Naive thymus-derived CD4-positive, alpha-beta T cell (primary cell): ENCODE measurements at regions of chr22 and their contacts with region 1.

Region 1: DNA sequence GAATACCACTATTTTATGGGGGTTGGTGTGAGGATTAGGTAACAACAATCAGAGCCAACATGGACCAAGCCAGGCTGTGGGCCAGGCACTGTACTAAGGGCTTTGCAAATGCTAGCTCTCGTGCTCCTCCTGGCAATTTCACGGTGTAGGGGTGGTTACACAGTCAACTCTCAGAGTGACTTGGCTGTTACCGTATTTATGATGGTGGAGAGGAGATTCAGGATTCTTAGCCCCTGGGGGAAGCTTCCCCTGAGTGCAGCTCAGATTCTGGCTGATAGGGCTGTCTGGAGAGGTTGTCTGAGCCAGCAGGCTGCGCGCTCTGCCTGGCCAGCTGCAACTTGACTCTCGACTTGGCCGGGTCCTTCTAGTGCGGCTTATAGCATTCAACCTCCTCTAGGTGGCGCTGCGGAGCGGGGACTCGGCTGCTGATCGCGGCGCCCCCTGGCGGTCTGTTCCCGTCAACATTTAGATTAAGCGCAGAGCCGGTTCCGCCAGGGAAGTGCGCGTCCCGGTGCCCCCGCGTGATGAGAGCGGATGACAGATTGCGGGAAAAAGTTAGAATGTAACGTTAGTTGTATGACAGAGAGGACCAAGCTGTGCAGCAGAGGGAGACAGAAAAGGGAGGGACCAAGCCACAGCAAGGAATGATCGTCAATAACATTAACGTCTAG is 4.5 kb upstream of the NCF4 start:
- DNase-seq: peak; percentile 79 to 99 (median 89)
- ATAC-seq: peak; percentile 92
- H3K4me3 ChIP-seq: no peak overlapping the region
- H3K4me3 Mint-ChIP-seq: peak overlapping the region in 8 of 10 donors; percentile 27 to 75 (median 56)
- H3K27ac ChIP-seq: no peak overlapping the region
- H3K27ac Mint-ChIP-seq: peak overlapping the region in 3 of 9 donors; percentile 1 to 38 (median 32)
- H3K4me1 ChIP-seq: peaks cover 0 to 15% of the 10 kb centered on the region in 2 donors
- H3K4me1 Mint-ChIP-seq: peaks cover 17 to 45% (median 21%) of the 10 kb centered on the region in 7 donors
- H3K27me3 ChIP-seq: no peaks in the 10 kb centered on the region
- H3K27me3 Mint-ChIP-seq: peaks cover 0 to 5% (median under 1%) of the 10 kb centered on the region in 5 donors

Region 2: DNA sequence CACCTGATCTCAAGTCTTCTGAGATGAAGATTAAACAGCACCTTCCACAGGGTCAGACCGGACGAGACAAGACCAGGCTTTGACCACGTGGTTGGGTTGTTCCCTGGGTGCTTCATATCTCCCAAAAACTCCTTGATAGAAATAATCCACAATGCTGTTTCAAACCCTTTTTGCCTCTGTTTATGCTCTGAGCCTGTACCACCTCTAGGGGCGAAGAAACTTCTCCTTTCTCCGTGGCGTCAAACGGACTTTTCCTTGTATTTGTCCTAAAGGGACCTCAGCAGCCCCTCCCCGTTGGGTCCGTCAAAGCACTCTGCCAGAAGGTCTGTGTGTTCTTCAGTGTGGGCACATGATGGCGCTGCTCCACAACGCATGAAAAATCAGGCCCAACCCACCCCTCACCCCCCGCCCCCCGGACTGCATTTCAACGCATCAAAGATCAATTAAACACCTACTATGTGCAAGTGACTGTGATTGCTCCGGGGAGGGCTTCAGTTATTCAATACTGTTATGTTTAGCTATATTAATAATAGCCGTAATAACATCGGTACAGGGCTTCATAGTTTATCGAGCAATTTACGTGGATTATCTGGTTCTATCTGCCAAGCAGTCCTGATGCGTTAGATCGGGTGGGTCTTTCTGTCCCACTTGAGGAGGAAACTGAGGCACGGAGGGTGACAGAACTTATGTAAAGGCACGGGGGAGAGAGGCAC is 310.0 kb before region 1 on chr22:
- CTCF ChIA-PET with region 1: no interaction called
- POLR2A ChIA-PET with region 1: no interaction called
- intact Hi-C with region 1: loop called in 1 of 2 experiments (anchors 1 kb)
- DNase-seq: peak in 3 of 9 donors; percentile 7 to 34 (median 10)
- ATAC-seq: peak; percentile 63
- H3K4me3 ChIP-seq: no peak overlapping the region
- H3K4me3 Mint-ChIP-seq: no peak overlapping the region
- H3K27ac ChIP-seq: no peak overlapping the region
- H3K27ac Mint-ChIP-seq: no peak overlapping the region
- H3K4me1 ChIP-seq: no peaks in the 10 kb centered on the region
- H3K4me1 Mint-ChIP-seq: peaks cover 0 to 37% (median 5%) of the 10 kb centered on the region in 7 donors
- H3K27me3 ChIP-seq: no peaks in the 10 kb centered on the region
- H3K27me3 Mint-ChIP-seq: peaks cover 8 to 24% (median 15%) of the 10 kb centered on the region in 5 donors

Region 3: GRCh38 chr22:36757668-36758211 is 98.5 kb before region 1 on chr22:
- CTCF ChIA-PET with region 1: interaction called, 4 read pairs
- POLR2A ChIA-PET with region 1: no interaction called
- intact Hi-C with region 1: loop called in 1 of 2 experiments (anchors 1 kb)
- DNase-seq: peak; percentile 32 to 75 (median 60)
- ATAC-seq: peak; percentile 89
- H3K4me3 ChIP-seq: no peak overlapping the region
- H3K4me3 Mint-ChIP-seq: no peak overlapping the region
- H3K27ac ChIP-seq: no peak overlapping the region
- H3K27ac Mint-ChIP-seq: peak overlapping the region in 1 of 9 donors; percentile 38
- H3K4me1 ChIP-seq: peaks cover 0 to 5% of the 10 kb centered on the region in 2 donors
- H3K4me1 Mint-ChIP-seq: peaks cover 0 to 22% (median 10%) of the 10 kb centered on the region in 7 donors
- H3K27me3 ChIP-seq: no peaks in the 10 kb centered on the region
- H3K27me3 Mint-ChIP-seq: peaks cover 1 to 11% (median 6%) of the 10 kb centered on the region in 5 donors

Region 4: DNA sequence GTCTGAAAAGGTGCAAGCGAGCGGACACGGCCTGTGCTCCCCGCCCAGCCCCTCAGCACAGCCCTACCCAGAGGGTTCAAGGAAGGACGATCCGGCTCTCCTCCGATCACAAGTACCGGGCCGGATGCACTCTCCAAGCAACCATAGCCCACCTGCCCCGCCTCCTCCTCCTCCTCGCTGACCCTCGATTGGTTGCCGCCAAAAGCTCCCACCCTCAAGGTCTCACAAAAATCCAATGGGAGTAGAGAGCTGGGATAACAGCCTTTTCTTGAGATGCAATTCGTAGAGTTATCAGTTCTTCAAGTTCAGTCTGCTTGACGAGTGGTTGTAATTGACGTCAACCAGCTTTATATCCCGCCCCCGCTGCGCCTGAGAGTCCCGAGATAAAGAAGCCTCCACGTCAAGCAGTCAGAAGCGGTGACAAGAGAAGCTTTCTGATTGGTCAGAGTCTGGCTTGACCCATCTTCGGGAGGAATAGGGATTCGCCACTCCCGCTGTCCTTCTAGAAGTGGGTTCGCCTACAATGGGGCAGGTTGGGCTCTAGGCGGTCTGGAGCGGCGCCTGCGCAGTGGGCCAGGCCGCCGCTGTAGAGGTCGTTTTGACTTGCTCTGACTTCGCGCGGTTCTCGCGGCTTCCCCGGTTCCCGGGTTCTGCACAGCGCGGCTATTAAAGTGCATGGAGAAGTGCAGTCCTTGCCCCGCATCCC is 80.1 kb before region 1 on chr22 and contains the start of gene IFT27:
- CTCF ChIA-PET with region 1: interaction called, 13 read pairs
- POLR2A ChIA-PET with region 1: no interaction called
- intact Hi-C with region 1: loop called (anchors 1 kb)
- DNase-seq: peak; percentile 72 to 99 (median 98)
- ATAC-seq: peak; percentile 92
- H3K4me3 ChIP-seq: peak within 1 kb of the TSS; percentile 65
- H3K4me3 Mint-ChIP-seq: peak within 1 kb of the TSS; percentile 85 to 97 (median 92)
- H3K27ac ChIP-seq: peak within 1 kb of the TSS; percentile 90
- H3K27ac Mint-ChIP-seq: peak within 1 kb of the TSS; percentile 92 to 99 (median 96)
- H3K4me1 ChIP-seq: peaks cover 13 to 15% of the 10 kb centered on the region in 2 donors
- H3K4me1 Mint-ChIP-seq: peaks cover 18 to 44% (median 31%) of the 10 kb centered on the region in 7 donors
- H3K27me3 ChIP-seq: no peaks in the 10 kb centered on the region
- H3K27me3 Mint-ChIP-seq: no peaks in the 10 kb centered on the region
- total RNA-seq, gene IFT27: 16.6 to 40.9 (median 32.0) TPM

Region 5: GRCh38 chr22:36781656-36782627 is 74.3 kb before region 1 on chr22:
- CTCF ChIA-PET with region 1: interaction called, 13 read pairs
- POLR2A ChIA-PET with region 1: no interaction called
- intact Hi-C with region 1: loop called (anchors 1 kb)
- DNase-seq: peak; percentile 66 to 92 (median 80)
- ATAC-seq: peak; percentile 98
- H3K4me3 ChIP-seq: no peak overlapping the region
- H3K4me3 Mint-ChIP-seq: peak overlapping the region in 4 of 10 donors; percentile 8 to 57 (median 43)
- H3K27ac ChIP-seq: no peak overlapping the region
- H3K27ac Mint-ChIP-seq: peak overlapping the region in 5 of 9 donors; percentile 27 to 72 (median 58)
- H3K4me1 ChIP-seq: peaks cover 4 to 10% of the 10 kb centered on the region in 2 donors
- H3K4me1 Mint-ChIP-seq: peaks cover 9 to 34% (median 18%) of the 10 kb centered on the region in 7 donors
- H3K27me3 ChIP-seq: no peaks in the 10 kb centered on the region
- H3K27me3 Mint-ChIP-seq: peaks cover 0 to 11% (median 7%) of the 10 kb centered on the region in 5 donors

Region 6: GRCh38 chr22:36873680-36874537 is 17.7 kb after region 1 on chr22:
- CTCF ChIA-PET with region 1: interaction called, 4 read pairs
- POLR2A ChIA-PET with region 1: no interaction called
- intact Hi-C with region 1: loop called in 1 of 2 experiments (anchors 1 kb)
- DNase-seq: peak in 1 of 9 donors; percentile 46
- ATAC-seq: peak; percentile 81
- H3K4me3 ChIP-seq: no peak overlapping the region
- H3K4me3 Mint-ChIP-seq: peak overlapping the region in 2 of 10 donors; percentile 29 to 39
- H3K27ac ChIP-seq: no peak overlapping the region
- H3K27ac Mint-ChIP-seq: peak overlapping the region in 2 of 9 donors; percentile 42 to 93
- H3K4me1 ChIP-seq: peaks cover 0 to 4% of the 10 kb centered on the region in 2 donors
- H3K4me1 Mint-ChIP-seq: peaks cover 0 to 30% (median 5%) of the 10 kb centered on the region in 7 donors
- H3K27me3 ChIP-seq: no peaks in the 10 kb centered on the region
- H3K27me3 Mint-ChIP-seq: peaks cover 0 to 9% (median 4%) of the 10 kb centered on the region in 5 donors

Region 7: GRCh38 chr22:36901411-36902142 is 45.3 kb after region 1 on chr22:
- CTCF ChIA-PET with region 1: interaction called, 3 read pairs
- POLR2A ChIA-PET with region 1: no interaction called
- intact Hi-C with region 1: loop called in 1 of 2 experiments (anchors 5 kb)
- DNase-seq: no peak
- ATAC-seq: peak; percentile 77
- H3K4me3 ChIP-seq: no peak overlapping the region
- H3K4me3 Mint-ChIP-seq: peak overlapping the region in 1 of 10 donors; percentile 72
- H3K27ac ChIP-seq: no peak overlapping the region
- H3K27ac Mint-ChIP-seq: peak overlapping the region in 1 of 9 donors; percentile 90
- H3K4me1 ChIP-seq: no peaks in the 10 kb centered on the region
- H3K4me1 Mint-ChIP-seq: peaks cover 0 to 33% (median 0%) of the 10 kb centered on the region in 7 donors
- H3K27me3 ChIP-seq: no peaks in the 10 kb centered on the region
- H3K27me3 Mint-ChIP-seq: peaks cover 19 to 46% (median 44%) of the 10 kb centered on the region in 5 donors